Motor neuron (in vitro differentiated cells): ENCODE measurements at regions of chrX and their contacts with region 1.

Region 1: GRCh38 chrX:72540318-72540717 is 32.3 kb downstream of the HDAC8 start:
- ATAC-seq: peak; percentile 35 to 77 (median 60)
- H3K4me3 ChIP-seq: no peak overlapping the region
- H3K27ac ChIP-seq: no peak overlapping the region
- H3K4me1 ChIP-seq: peaks cover 0 to 5% of the 10 kb centered on the region in 2 donors

Region 2: GRCh38 chrX:72297953-72298730 is 242.2 kb before region 1 on chrX:
- in situ Hi-C with region 1: loop called in 3 of 9 experiments (anchors 25 kb)
- ATAC-seq: peak in 3 of 8 experiments; percentile 71 to 89 (median 79)
- H3K4me3 ChIP-seq: no peak overlapping the region
- H3K27ac ChIP-seq: no peak overlapping the region
- H3K4me1 ChIP-seq: no peaks in the 10 kb centered on the region

Region 3: GRCh38 chrX:72306851-72307645 is 233.3 kb before region 1 on chrX:
- in situ Hi-C with region 1: loop called in 2 of 9 experiments (anchors 25 kb)
- ATAC-seq: peak; percentile 70 to 81 (median 79)
- H3K4me3 ChIP-seq: peak overlapping the region; percentile 63 to 79 (median 67)
- H3K27ac ChIP-seq: peak overlapping the region in 1 of 2 donors; percentile 26
- H3K4me1 ChIP-seq: peaks cover 0 to 4% of the 10 kb centered on the region in 2 donors

Region 4: GRCh38 chrX:72676465-72676864 is 136.1 kb after region 1 on chrX:
- in situ Hi-C with region 1: no loop called
- ATAC-seq: no peak
- H3K4me3 ChIP-seq: no peak overlapping the region
- H3K27ac ChIP-seq: no peak overlapping the region
- H3K4me1 ChIP-seq: no peaks in the 10 kb centered on the region